CD4-positive, alpha-beta T cell (primary cell): ENCODE measurements at regions of chr6 and their contacts with region 1.

Region 1: DNA sequence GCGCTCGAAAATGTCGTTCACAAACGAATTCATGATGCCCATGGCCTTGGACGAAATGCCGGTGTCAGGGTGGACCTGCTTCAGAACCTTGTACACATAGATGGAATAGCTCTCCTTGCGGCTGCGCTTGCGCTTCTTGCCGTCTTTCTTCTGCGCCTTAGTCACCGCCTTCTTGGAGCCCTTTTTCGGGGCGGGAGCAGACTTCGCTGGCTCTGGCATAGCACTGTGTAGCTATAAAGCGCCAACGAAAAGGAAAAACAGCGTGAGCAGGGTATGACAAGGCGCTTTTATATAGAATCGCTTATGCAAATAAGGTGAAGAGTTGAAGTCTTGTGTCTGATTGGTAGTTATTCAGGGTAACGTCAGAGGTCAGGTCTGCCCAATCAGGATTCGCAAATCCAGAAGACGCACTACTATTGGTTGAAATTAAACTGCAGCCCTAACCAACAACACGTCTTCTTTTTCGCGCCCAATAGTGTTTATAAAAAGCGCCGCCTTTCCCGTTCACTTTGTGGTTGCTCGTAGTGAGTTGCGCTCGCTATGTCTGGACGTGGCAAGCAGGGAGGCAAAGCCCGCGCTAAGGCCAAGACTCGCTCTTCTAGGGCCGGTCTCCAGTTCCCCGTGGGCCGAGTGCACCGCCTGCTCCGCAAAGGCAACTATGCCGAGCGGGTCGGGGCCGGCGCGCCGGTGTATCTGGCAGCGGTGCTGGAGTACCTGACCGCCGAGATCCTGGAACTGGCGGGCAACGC is 114.8 kb upstream of the PRSS16 start:
- DNase-seq: peak; percentile 80 to 99 (median 88)
- ATAC-seq: peak; percentile 79
- H3K4me3 ChIP-seq: peak overlapping the region; percentile 75
- H3K4me3 Mint-ChIP-seq: no peak overlapping the region
- H3K27ac ChIP-seq: peak overlapping the region; percentile 79 to 81
- H3K27ac Mint-ChIP-seq: no peak overlapping the region
- H3K4me1 ChIP-seq: peaks cover 31% of the 10 kb centered on the region
- H3K4me1 Mint-ChIP-seq: peaks cover 12% of the 10 kb centered on the region
- H3K27me3 ChIP-seq: no peaks in the 10 kb centered on the region
- H3K27me3 Mint-ChIP-seq: no peaks in the 10 kb centered on the region
- CTCF ChIP-seq: no peak

Region 2: GRCh38 chr6:26103770-26104456 is 1028.8 kb before region 1 on chr6:
- CTCF ChIA-PET with region 1: interaction called, 3 read pairs
- POLR2A ChIA-PET with region 1: interaction called, 6 read pairs
- intact Hi-C with region 1: loop called in 1 of 2 experiments (anchors 5 kb)
- DNase-seq: peak; percentile 84 to 96 (median 90)
- ATAC-seq: peak; percentile 88
- H3K4me3 ChIP-seq: peak overlapping the region; percentile 58
- H3K4me3 Mint-ChIP-seq: peak overlapping the region; percentile 94
- H3K27ac ChIP-seq: peak overlapping the region; percentile 83 to 85
- H3K27ac Mint-ChIP-seq: peak overlapping the region; percentile 99
- H3K4me1 ChIP-seq: peaks cover 16% of the 10 kb centered on the region
- H3K4me1 Mint-ChIP-seq: peaks cover 13% of the 10 kb centered on the region
- H3K27me3 ChIP-seq: no peaks in the 10 kb centered on the region
- H3K27me3 Mint-ChIP-seq: peaks cover 5% of the 10 kb centered on the region
- CTCF ChIP-seq: peak; percentile 58

Region 3: GRCh38 chr6:26285143-26286134 is 847.3 kb before region 1 on chr6:
- CTCF ChIA-PET with region 1: no interaction called
- POLR2A ChIA-PET with region 1: interaction called, 3 read pairs
- intact Hi-C with region 1: loop called (anchors 5 to 10 kb)
- DNase-seq: peak; percentile 85 to 99 (median 92)
- ATAC-seq: peak; percentile 82
- H3K4me3 ChIP-seq: peak overlapping the region; percentile 62
- H3K4me3 Mint-ChIP-seq: peak overlapping the region; percentile 87
- H3K27ac ChIP-seq: peak overlapping the region; percentile 82 to 85
- H3K27ac Mint-ChIP-seq: peak overlapping the region; percentile 96
- H3K4me1 ChIP-seq: peaks cover 16% of the 10 kb centered on the region
- H3K4me1 Mint-ChIP-seq: peaks cover 24% of the 10 kb centered on the region
- H3K27me3 ChIP-seq: no peaks in the 10 kb centered on the region
- H3K27me3 Mint-ChIP-seq: peaks cover 11% of the 10 kb centered on the region
- CTCF ChIP-seq: no peak

Region 4: DNA sequence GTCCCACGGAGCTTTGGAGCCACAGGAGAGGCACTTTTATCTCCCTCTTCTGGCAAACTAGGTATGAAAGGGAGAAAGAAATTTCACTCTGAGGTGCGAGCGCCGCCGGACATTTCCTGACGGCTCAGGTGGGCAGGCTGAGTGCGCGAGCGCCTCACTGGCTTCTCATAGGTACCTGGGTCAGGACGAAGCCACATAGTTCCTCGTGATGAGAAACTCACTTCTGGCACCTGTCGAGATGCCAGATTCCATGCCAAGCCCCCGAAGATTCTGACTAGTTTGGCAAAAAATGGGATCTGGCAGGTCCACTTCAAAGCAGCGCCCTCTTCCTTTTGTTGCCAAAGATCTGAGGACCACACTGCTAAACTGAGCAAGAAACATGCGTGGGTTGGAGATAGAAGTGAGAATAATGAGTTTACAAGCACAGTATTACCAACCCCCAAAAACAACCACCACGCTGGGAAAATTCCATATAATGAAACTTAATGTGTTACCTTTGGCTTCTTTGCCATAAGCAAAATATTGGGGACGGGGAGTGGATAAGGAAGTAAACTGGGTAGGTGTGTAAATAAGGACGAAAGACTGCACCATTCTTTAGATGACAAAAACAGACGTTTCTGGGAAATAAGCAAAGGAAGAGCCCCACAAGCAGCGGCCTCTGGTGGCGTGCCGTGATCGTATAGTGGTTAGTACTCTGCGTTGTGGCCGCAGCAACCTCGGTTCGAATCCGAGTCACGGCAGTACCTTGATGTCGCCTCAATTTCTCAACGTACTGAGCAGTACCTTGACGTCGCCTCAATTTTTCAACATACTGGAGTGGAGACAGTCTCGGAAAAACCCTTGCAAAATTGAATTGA is 25.0 kb after region 1 on chr6:
- CTCF ChIA-PET with region 1: interaction called, 29 read pairs
- POLR2A ChIA-PET with region 1: interaction called, 37 read pairs
- intact Hi-C with region 1: loop called (anchors 1 kb)
- DNase-seq: peak; percentile 73 to 93 (median 85)
- ATAC-seq: peak; percentile 88
- H3K4me3 ChIP-seq: peak overlapping the region; percentile 59
- H3K4me3 Mint-ChIP-seq: peak overlapping the region; percentile 90
- H3K27ac ChIP-seq: peak overlapping the region in 1 of 2 donors; percentile 32
- H3K27ac Mint-ChIP-seq: peak overlapping the region; percentile 96
- H3K4me1 ChIP-seq: peaks cover 22% of the 10 kb centered on the region
- H3K4me1 Mint-ChIP-seq: peaks cover 44% of the 10 kb centered on the region
- H3K27me3 ChIP-seq: no peaks in the 10 kb centered on the region
- H3K27me3 Mint-ChIP-seq: peaks cover 7% of the 10 kb centered on the region
- CTCF ChIP-seq: peak; percentile 78

Region 5: DNA sequence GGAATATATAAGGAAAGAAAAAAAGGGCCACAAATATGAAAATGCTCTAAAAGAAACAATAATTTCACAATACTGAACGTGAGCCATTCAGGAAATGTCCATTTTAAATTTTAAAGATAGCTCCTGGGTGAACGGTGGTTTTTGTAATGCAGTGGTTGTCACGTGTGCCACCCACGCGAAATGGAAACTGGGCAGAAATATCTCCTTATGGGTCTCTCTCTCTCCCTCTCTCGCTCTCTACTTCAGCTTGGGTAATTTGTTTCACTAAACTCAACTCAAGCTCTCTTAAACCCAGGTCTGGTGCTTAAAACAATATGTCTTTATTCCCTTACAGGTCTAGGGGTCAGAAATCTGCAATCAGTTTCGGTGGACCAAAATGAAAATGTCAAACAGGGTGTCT is 628.7 kb after region 1 on chr6:
- CTCF ChIA-PET with region 1: no interaction called
- POLR2A ChIA-PET with region 1: interaction called, 20 read pairs
- intact Hi-C with region 1: no loop called
- DNase-seq: peak in 2 of 14 experiments; percentile 11 to 17
- ATAC-seq: peak; percentile 41
- H3K4me3 ChIP-seq: no peak overlapping the region
- H3K4me3 Mint-ChIP-seq: peak overlapping the region; percentile 94
- H3K27ac ChIP-seq: no peak overlapping the region
- H3K27ac Mint-ChIP-seq: peak overlapping the region; percentile 98
- H3K4me1 ChIP-seq: peaks cover 14% of the 10 kb centered on the region
- H3K4me1 Mint-ChIP-seq: peaks cover 40% of the 10 kb centered on the region
- H3K27me3 ChIP-seq: no peaks in the 10 kb centered on the region
- H3K27me3 Mint-ChIP-seq: peaks cover 2% of the 10 kb centered on the region
- CTCF ChIP-seq: no peak

Region 6: DNA sequence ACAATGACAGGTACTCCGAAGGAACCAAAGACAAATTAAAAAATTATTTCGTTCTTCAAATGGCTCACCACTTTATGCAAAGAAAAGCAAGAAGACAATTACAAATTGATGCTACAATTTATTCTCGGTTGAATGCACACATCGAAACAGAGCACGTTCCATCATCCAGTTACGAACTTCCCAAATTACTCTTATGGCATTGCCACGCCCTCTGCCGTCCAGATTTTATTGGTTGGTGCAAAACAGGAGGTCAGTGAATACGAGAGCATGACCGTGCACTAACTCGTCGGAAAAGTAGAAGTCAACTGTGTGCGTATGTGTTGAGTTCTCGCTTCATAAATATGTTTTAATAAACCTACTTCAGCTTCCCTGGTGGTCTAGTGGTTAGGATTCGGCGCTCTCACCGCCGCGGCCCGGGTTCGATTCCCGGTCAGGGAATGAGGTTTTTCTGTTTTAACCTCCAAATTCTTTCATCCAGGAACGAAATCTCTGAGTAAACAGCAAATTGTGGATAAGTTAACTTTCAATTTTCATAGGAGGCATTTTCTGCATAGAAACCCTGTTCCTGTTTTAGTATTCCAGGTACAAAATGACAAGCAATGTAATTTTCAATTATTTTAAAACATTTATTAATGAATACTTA is 1849.2 kb after region 1 on chr6:
- CTCF ChIA-PET with region 1: no interaction called
- POLR2A ChIA-PET with region 1: interaction called, 3 read pairs
- intact Hi-C with region 1: loop called in 1 of 2 experiments (anchors 5 kb)
- DNase-seq: peak; percentile 46 to 91 (median 64)
- ATAC-seq: peak; percentile 62
- H3K4me3 ChIP-seq: peak overlapping the region; percentile 88
- H3K4me3 Mint-ChIP-seq: peak overlapping the region; percentile 95
- H3K27ac ChIP-seq: no peak overlapping the region
- H3K27ac Mint-ChIP-seq: peak overlapping the region; percentile 98
- H3K4me1 ChIP-seq: peaks cover 28% of the 10 kb centered on the region
- H3K4me1 Mint-ChIP-seq: peaks cover 82% of the 10 kb centered on the region
- H3K27me3 ChIP-seq: peaks cover 0 to 15% of the 10 kb centered on the region in 2 experiments
- H3K27me3 Mint-ChIP-seq: peaks cover 64% of the 10 kb centered on the region
- CTCF ChIP-seq: no peak